Ascending aorta (tissue), 2 donors: ENCODE measurements at regions of chr6 and their contacts with region 1.

Region 1: DNA sequence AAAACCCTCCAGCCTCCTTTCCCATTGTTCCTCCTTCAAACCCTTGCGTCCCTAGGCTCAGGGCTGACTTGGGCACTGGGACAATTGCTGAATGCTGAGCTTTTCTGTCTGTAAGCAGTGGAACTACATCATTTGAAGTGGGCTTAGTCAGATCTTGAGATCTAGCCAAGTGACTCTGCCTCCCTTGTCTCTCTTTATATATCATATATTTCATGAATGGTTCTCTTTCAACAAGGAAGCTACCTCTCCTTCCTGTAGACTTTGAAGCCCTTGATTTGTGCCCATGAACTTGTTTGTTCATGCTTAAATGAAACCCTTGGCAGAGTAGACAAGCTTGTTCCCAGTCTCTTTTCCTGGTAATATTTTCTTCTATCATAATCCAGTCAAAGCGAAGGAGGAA is 60.0 kb upstream of the KIF13A start:
- DNase-seq: peak in 1 of 2 donors; percentile 58
- H3K4me3 ChIP-seq: no peak overlapping the region
- H3K27ac ChIP-seq: peak overlapping the region; percentile 61 to 77
- H3K4me1 ChIP-seq: peaks cover 10 to 22% of the 10 kb centered on the region in 2 donors
- H3K27me3 ChIP-seq: no peaks in the 10 kb centered on the region
- CTCF ChIP-seq: no peak

Region 2: DNA sequence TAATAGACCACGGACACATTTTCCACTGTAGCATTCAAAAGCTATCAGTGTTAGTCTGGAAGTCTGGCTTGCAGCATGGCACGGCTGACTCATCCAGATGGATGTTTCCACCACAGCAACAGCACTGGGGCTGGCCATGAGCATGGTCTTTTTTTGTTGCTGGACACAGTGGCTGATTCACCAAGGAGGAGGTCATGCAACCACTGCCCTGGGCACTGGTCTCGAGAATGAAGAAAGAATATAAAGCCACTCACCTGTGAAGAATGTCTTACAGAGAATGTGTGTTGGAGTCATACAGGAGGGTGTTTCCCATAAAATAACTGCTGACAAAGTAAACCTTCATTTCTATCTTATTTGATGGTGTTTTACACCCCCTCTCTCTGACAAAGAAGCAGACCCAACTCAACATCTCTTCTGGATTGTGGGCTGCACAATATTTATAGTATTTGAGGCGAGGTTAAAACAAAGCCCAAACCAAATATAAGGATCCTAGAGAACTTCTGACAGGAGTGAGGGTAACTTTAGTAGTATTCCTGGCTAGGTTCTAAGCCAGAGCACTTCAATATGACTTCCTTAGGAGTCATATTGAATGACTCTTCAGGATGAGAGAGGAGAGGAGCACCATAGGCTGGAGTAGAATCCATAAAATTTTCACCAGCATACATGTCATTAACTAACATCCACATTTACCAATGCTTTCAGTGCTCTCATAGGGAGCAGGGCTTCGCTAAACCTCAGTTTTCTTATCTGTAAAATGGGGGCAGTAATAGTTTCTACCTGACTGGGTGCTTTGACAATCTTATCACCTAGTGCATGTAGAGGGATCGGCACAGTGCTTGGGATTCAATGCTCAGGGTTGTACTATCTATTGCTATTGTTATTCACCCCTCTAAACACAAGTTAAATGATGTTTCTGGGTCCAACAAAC is 181.3 kb before region 1 on chr6:
- intact Hi-C with region 1: loop called (anchors 5 kb)
- DNase-seq: peak; percentile 86 to 96
- H3K4me3 ChIP-seq: no peak overlapping the region
- H3K27ac ChIP-seq: peak overlapping the region; percentile 78 to 92
- H3K4me1 ChIP-seq: peaks cover 16 to 40% of the 10 kb centered on the region in 2 donors
- H3K27me3 ChIP-seq: no peaks in the 10 kb centered on the region
- CTCF ChIP-seq: no peak

Region 3: DNA sequence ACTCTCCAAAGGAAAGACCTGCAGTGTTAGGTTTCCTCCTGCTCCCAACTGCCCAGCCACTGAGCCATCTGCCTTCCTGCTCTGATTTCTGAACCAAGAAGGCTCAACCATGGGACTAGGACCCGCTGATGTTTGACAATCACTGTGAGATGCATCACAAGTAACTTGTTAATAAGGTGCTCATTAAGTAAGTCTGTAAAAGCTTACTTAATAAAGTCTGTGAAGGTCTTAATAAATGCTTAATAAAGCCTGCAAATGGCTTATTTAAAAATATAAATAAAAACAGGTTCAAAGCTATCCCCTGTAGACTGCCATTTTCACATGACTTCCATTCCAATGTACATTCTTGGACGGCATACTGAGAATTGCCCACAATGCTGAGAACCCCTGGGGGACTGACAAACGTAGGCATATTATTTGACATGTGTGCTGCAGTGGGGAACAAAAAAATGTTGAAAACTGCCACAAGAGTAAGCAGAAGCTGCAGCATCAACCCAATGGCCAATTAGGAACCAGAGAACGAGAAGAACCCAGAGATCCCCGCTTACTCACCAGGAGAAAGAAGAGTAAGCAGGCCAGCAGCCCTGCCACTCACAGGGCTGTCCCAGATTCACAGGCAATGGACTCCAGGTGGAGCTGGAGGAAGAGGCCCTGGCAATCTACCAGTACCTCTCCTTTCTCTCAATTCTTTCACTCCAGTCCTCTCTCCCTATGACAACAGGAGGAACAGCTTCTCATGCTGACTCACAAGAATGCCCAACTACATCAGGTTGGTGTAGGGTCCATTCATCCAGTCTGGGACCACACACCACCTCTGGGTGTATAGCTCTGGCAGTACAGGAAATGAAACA is 79.5 kb before region 1 on chr6:
- intact Hi-C with region 1: loop called (anchors 5 kb)
- DNase-seq: no peak
- H3K4me3 ChIP-seq: no peak overlapping the region
- H3K27ac ChIP-seq: peak overlapping the region; percentile 84 to 89
- H3K4me1 ChIP-seq: peaks cover 17 to 67% of the 10 kb centered on the region in 2 donors
- H3K27me3 ChIP-seq: no peaks in the 10 kb centered on the region
- CTCF ChIP-seq: no peak

Region 4: GRCh38 chr6:17987576-17988421 is 59.6 kb before region 1 on chr6 and contains the start of gene KIF13A:
- intact Hi-C with region 1: loop called (anchors 5 kb)
- DNase-seq: peak in 1 of 2 donors; percentile 86
- H3K4me3 ChIP-seq: peak within 1 kb of the TSS; percentile 81 to 84
- H3K27ac ChIP-seq: peak within 1 kb of the TSS; percentile 92 to 93
- H3K4me1 ChIP-seq: peaks cover 0 to 18% of the 10 kb centered on the region in 2 donors
- H3K27me3 ChIP-seq: no peaks in the 10 kb centered on the region
- CTCF ChIP-seq: peak in 2 of 3 experiments; percentile 20 to 42
- total RNA-seq, gene KIF13A: 28.9 TPM

Region 5: GRCh38 chr6:18122124-18123093 is 75.0 kb after region 1 on chr6 and contains the start of gene NHLRC1:
- intact Hi-C with region 1: loop called (anchors 2 kb)
- DNase-seq: peak; percentile 68 to 95
- H3K4me3 ChIP-seq: peak within 1 kb of the TSS; percentile 66 to 77
- H3K27ac ChIP-seq: peak within 1 kb of the TSS; percentile 15 to 63
- H3K4me1 ChIP-seq: peaks cover 0 to 10% of the 10 kb centered on the region in 2 donors
- H3K27me3 ChIP-seq: no peaks in the 10 kb centered on the region
- CTCF ChIP-seq: peak; percentile 90 to 98 (median 96)
- total RNA-seq, gene NHLRC1: 0.32 TPM